ENCODE measurements at regions of chr22 and their contacts with region 1.

Region 1: GRCh38 chr22:30423982-30424963 is 1.3 kb upstream of the MTFP1 start:
- DNase-seq: peak; percentile 94 to 100 (median 98)
- ATAC-seq: peak; percentile 84
- H3K4me3 ChIP-seq: peak overlapping the region; percentile 74
- H3K4me3 Mint-ChIP-seq: peak overlapping the region; percentile 99
- H3K27ac ChIP-seq: peak overlapping the region; percentile 86 to 87
- H3K27ac Mint-ChIP-seq: peak overlapping the region; percentile 98
- H3K4me1 ChIP-seq: peaks cover 53% of the 10 kb centered on the region
- H3K4me1 Mint-ChIP-seq: peaks cover 55% of the 10 kb centered on the region
- H3K27me3 ChIP-seq: no peaks in the 10 kb centered on the region
- H3K27me3 Mint-ChIP-seq: no peaks in the 10 kb centered on the region
- CTCF ChIP-seq: no peak

Region 2: DNA sequence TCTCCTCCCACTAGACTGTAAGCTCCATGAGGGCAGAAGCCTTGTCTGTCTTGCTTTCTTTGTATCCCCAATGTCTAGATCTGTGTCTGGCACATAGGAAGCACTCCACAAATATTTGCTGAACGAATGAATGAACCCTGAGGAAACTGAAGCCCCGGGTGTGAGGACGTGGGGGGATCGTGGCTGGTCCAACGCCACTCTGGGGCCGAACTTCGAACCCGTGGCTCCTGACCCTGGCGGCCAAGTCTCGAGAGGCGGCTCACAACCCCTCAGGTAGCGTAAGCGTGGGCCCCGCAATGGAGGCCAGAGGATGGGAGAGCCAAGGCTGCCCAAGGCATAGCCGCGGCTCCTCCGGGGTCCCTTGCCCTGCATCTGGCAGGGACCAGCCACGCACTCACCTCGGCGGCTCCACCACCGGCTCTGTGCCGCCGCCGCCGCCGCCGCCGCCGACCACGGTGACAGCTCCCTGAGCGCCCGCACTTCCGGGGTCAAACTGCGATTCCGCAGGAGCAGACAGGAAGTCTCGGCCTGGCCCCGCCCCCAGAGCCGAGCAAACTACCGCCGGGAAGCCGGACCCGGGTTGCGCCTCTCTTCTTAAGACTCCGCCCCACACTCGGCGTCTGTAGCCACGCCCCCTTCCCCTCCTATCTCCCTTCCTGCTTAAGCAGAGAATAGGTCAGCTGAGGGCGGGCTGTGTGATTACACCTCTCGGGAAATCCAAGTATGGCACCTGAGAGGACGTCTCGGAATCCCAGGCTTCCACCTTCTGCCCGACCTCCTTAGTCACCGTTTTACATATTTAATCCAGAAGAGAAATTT is 586.3 kb before region 1 on chr22 and contains the start of gene ASCC2:
- CTCF ChIA-PET with region 1: no interaction called
- POLR2A ChIA-PET with region 1: interaction called, 4 read pairs
- intact Hi-C with region 1: loop called in 1 of 2 experiments (anchors 10 kb)
- DNase-seq: peak; percentile 97 to 100 (median 99)
- ATAC-seq: peak; percentile 97
- H3K4me3 ChIP-seq: peak within 1 kb of the TSS; percentile 72
- H3K4me3 Mint-ChIP-seq: peak within 1 kb of the TSS; percentile 94
- H3K27ac ChIP-seq: peak within 1 kb of the TSS; percentile 75 to 88
- H3K27ac Mint-ChIP-seq: peak within 1 kb of the TSS; percentile 94
- H3K4me1 ChIP-seq: peaks cover 27% of the 10 kb centered on the region
- H3K4me1 Mint-ChIP-seq: peaks cover 50% of the 10 kb centered on the region
- H3K27me3 ChIP-seq: no peaks in the 10 kb centered on the region
- H3K27me3 Mint-ChIP-seq: no peaks in the 10 kb centered on the region
- CTCF ChIP-seq: no peak
- total RNA-seq, gene ASCC2: 67.1 to 68.3 TPM

Region 3: GRCh38 chr22:30305519-30305905 is 118.8 kb before region 1 on chr22:
- CTCF ChIA-PET with region 1: no interaction called
- POLR2A ChIA-PET with region 1: interaction called, 18 read pairs
- intact Hi-C with region 1: no loop called
- DNase-seq: peak in 12 of 14 experiments; percentile 29 to 88 (median 54)
- ATAC-seq: peak; percentile 63
- H3K4me3 ChIP-seq: peak overlapping the region; percentile 34
- H3K4me3 Mint-ChIP-seq: peak overlapping the region; percentile 49
- H3K27ac ChIP-seq: peak overlapping the region; percentile 74 to 81
- H3K27ac Mint-ChIP-seq: peak overlapping the region; percentile 83
- H3K4me1 ChIP-seq: peaks cover 97% of the 10 kb centered on the region
- H3K4me1 Mint-ChIP-seq: peaks cover 97% of the 10 kb centered on the region
- H3K27me3 ChIP-seq: no peaks in the 10 kb centered on the region
- H3K27me3 Mint-ChIP-seq: no peaks in the 10 kb centered on the region
- CTCF ChIP-seq: no peak

Region 4: DNA sequence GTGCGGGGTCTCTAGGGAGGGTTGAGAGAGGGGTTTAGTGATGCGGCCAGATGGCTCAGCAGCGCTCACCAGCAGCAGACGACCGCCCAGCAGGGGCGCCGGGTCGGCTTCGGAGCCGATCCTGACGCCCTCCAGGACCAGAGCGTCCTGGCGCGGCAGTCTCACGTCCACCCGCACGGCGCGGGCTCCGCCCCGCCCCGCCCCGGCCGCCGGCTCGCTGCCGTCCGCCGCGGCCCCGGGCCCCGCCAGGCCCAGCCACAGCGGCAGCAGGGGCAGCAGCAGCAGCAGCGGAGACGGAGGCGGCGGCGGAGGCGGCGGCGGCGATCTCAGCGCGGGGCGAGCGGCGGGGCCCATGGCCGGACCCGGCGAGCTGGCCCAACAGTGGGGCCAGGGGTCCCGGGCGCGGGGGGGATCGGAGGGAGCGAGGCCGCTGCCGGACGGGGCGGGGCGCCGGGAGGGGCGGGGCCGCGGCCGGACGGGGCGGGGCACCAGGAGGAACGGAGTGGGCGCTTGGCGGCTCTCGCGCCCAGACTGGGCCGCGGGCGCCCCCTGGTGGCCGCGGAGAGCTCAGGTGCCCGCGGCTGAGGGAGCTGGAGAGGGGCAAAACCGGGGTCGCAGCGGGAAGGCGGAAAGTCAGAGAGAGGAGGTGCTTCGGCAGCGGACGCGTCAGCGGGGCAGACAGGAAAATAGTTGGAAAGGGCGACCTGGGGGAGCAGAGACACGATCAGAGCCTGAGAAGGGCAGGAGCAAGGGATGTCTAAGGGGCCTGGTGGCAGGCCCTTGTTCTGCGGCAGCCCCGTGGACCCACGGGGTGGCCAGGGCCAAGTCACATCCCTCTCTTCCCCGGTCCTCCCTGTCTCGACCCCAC is 37.1 kb before region 1 on chr22 and contains the start of gene RNF215:
- CTCF ChIA-PET with region 1: interaction called, 63 read pairs
- POLR2A ChIA-PET with region 1: interaction called, 27 read pairs
- intact Hi-C with region 1: loop called (anchors 1 kb)
- DNase-seq: peak; percentile 44 to 91 (median 74)
- ATAC-seq: peak; percentile 82
- H3K4me3 ChIP-seq: peak within 1 kb of the TSS; percentile 45
- H3K4me3 Mint-ChIP-seq: peak within 1 kb of the TSS; percentile 87
- H3K27ac ChIP-seq: no peak within 1 kb of the TSS
- H3K27ac Mint-ChIP-seq: no peak within 1 kb of the TSS
- H3K4me1 ChIP-seq: peaks cover 19% of the 10 kb centered on the region
- H3K4me1 Mint-ChIP-seq: peaks cover 26% of the 10 kb centered on the region
- H3K27me3 ChIP-seq: no peaks in the 10 kb centered on the region
- H3K27me3 Mint-ChIP-seq: no peaks in the 10 kb centered on the region
- CTCF ChIP-seq: peak; percentile 69
- total RNA-seq, gene RNF215: 4.6 to 4.9 TPM

Region 5: GRCh38 chr22:30413745-30414524 is 10.3 kb before region 1 on chr22:
- CTCF ChIA-PET with region 1: interaction called, 6 read pairs
- POLR2A ChIA-PET with region 1: interaction called, 104 read pairs
- intact Hi-C with region 1: no loop called
- DNase-seq: peak in 1 of 14 experiments; percentile 17
- ATAC-seq: peak; percentile 76
- H3K4me3 ChIP-seq: no peak overlapping the region
- H3K4me3 Mint-ChIP-seq: peak overlapping the region; percentile 13
- H3K27ac ChIP-seq: peak overlapping the region in 1 of 2 donors; percentile 43
- H3K27ac Mint-ChIP-seq: peak overlapping the region; percentile 81
- H3K4me1 ChIP-seq: peaks cover 21% of the 10 kb centered on the region
- H3K4me1 Mint-ChIP-seq: peaks cover 59% of the 10 kb centered on the region
- H3K27me3 ChIP-seq: no peaks in the 10 kb centered on the region
- H3K27me3 Mint-ChIP-seq: no peaks in the 10 kb centered on the region
- CTCF ChIP-seq: no peak

Region 6: GRCh38 chr22:30474683-30475424 is 50.6 kb after region 1 on chr22:
- CTCF ChIA-PET with region 1: no interaction called
- POLR2A ChIA-PET with region 1: no interaction called
- intact Hi-C with region 1: no loop called
- DNase-seq: peak in 5 of 14 experiments; percentile 7 to 71 (median 55)
- ATAC-seq: peak; percentile 88
- H3K4me3 ChIP-seq: no peak overlapping the region
- H3K4me3 Mint-ChIP-seq: no peak overlapping the region
- H3K27ac ChIP-seq: no peak overlapping the region
- H3K27ac Mint-ChIP-seq: no peak overlapping the region
- H3K4me1 ChIP-seq: peaks cover 12% of the 10 kb centered on the region
- H3K4me1 Mint-ChIP-seq: no peaks in the 10 kb centered on the region
- H3K27me3 ChIP-seq: peaks cover 9 to 14% of the 10 kb centered on the region in 2 experiments
- H3K27me3 Mint-ChIP-seq: peaks cover 23% of the 10 kb centered on the region
- CTCF ChIP-seq: no peak

Region 7: GRCh38 chr22:30591588-30592359 is 167.5 kb after region 1 on chr22 and contains the start of gene PES1:
- CTCF ChIA-PET with region 1: no interaction called
- POLR2A ChIA-PET with region 1: interaction called, 6 read pairs
- intact Hi-C with region 1: loop called in 1 of 2 experiments (anchors 1 kb)
- DNase-seq: peak; percentile 91 to 99 (median 94)
- ATAC-seq: peak; percentile 96
- H3K4me3 ChIP-seq: peak within 1 kb of the TSS; percentile 96
- H3K4me3 Mint-ChIP-seq: no peak within 1 kb of the TSS
- H3K27ac ChIP-seq: peak within 1 kb of the TSS; percentile 85 to 97
- H3K27ac Mint-ChIP-seq: no peak within 1 kb of the TSS
- H3K4me1 ChIP-seq: peaks cover 16% of the 10 kb centered on the region
- H3K4me1 Mint-ChIP-seq: no peaks in the 10 kb centered on the region
- H3K27me3 ChIP-seq: no peaks in the 10 kb centered on the region
- H3K27me3 Mint-ChIP-seq: no peaks in the 10 kb centered on the region
- CTCF ChIP-seq: no peak
- total RNA-seq, gene PES1: 28.4 to 30.5 TPM

Measured in CD4-positive, alpha-beta T cell (primary cell).